Activated CD8-positive, alpha-beta T cell treated with anti-CD3 and anti-CD28 coated beads, Interleukin-2, amount 10 ng/mL, durations not matched to agents 7 days and 5 days (primary cell): ENCODE measurements at regions of chr4 and their contacts with region 1.

Region 1: DNA sequence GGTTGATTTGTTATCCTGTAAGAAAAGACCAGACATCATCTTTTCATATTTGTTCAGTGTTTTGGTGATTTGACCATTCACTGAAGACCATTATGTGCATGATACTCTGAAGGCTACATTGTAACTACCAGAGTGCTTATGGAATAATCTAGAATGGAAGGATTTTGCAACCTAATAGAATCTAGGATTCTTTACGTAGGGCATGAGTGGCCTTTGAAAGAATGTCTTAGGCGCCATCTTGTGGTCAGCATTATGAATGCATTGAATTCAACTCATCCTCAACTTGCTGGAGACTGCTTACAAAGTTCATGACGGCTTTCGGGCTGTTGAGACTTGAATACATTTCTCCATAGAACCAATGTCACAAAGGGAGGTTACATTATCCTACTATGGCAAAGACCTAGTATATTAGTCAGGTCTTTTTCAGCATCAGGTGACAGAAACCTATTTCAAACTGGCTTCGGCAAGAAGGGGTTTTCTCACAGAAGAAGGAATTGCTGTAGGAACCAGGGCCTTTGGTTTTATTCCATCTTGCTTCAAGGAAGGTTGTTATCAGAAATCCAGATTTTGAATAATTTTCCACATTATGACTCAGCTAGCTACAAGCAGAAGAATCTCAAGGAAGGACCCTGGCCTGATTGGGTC is 104.1 kb downstream of the GPAT3 start:
- DNase-seq: peak; percentile 73
- ATAC-seq: peak; percentile 65
- H3K4me3 Mint-ChIP-seq: no peak overlapping the region
- H3K27ac Mint-ChIP-seq: no peak overlapping the region
- H3K4me1 Mint-ChIP-seq: no peaks in the 10 kb centered on the region
- H3K27me3 Mint-ChIP-seq: peaks cover 10% of the 10 kb centered on the region

Region 2: DNA sequence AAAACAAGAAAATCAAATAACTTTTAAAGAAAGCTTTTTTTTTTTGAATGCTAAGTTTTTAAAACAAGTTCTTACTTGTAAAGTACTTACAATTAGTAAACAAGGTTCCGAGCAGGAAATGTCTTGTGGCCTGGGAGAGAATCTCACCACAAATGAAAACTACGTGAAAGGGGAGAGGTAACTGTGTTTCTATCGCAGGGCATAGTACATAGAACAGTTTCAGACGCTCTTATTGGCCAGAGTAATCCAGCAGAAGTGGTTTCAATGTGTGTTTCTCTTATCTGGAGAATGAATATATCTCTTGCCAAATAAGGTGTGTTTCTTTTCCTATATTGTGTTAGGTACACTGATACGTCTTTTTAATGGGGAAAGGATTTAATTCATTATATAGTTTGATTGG is 525.4 kb before region 1 on chr4 and contains the start of gene PLAC8:
- CTCF ChIA-PET with region 1: no interaction called
- POLR2A ChIA-PET with region 1: no interaction called
- DNase-seq: peak; percentile 82
- ATAC-seq: peak; percentile 60
- H3K4me3 Mint-ChIP-seq: peak within 1 kb of the TSS; percentile 89
- H3K27ac Mint-ChIP-seq: peak within 1 kb of the TSS; percentile 93
- H3K4me1 Mint-ChIP-seq: peaks cover 55% of the 10 kb centered on the region
- H3K27me3 Mint-ChIP-seq: no peaks in the 10 kb centered on the region
- total RNA-seq, gene PLAC8: 193 to 198 TPM

Region 3: GRCh38 chr4:83510442-83510841 is 129.5 kb before region 1 on chr4:
- CTCF ChIA-PET with region 1: interaction called, 21 read pairs
- POLR2A ChIA-PET with region 1: no interaction called
- DNase-seq: no peak
- ATAC-seq: no peak
- H3K4me3 Mint-ChIP-seq: no peak overlapping the region
- H3K27ac Mint-ChIP-seq: no peak overlapping the region
- H3K4me1 Mint-ChIP-seq: no peaks in the 10 kb centered on the region
- H3K27me3 Mint-ChIP-seq: no peaks in the 10 kb centered on the region

Region 4: GRCh38 chr4:83651502-83652245 is 11.7 kb after region 1 on chr4:
- CTCF ChIA-PET with region 1: interaction called, 19 read pairs
- POLR2A ChIA-PET with region 1: no interaction called
- DNase-seq: no peak
- ATAC-seq: no peak
- H3K4me3 Mint-ChIP-seq: no peak overlapping the region
- H3K27ac Mint-ChIP-seq: no peak overlapping the region
- H3K4me1 Mint-ChIP-seq: no peaks in the 10 kb centered on the region
- H3K27me3 Mint-ChIP-seq: peaks cover 2% of the 10 kb centered on the region

Region 5: DNA sequence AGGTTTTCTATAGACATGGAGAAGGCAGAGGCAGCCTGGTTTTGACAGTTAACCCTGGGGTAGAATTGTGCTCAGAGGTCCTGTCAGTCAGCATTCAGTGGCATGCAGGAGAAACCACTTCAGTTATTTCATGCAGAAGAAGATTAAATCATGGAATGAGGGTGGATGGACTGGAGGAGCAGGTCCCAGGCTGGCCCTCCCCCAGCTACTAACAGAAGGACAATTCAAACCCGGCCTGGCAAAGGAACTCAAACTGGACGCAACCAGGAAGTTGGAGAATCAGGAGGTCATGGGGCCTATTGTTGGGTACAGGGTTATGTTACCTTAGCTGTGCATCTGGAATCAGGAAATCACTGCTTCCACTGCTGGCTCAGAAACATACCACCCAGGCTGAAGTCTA is 17.3 kb after region 1 on chr4:
- CTCF ChIA-PET with region 1: interaction called, 19 read pairs
- POLR2A ChIA-PET with region 1: no interaction called
- DNase-seq: no peak
- ATAC-seq: no peak
- H3K4me3 Mint-ChIP-seq: no peak overlapping the region
- H3K27ac Mint-ChIP-seq: no peak overlapping the region
- H3K4me1 Mint-ChIP-seq: peaks cover 7% of the 10 kb centered on the region
- H3K27me3 Mint-ChIP-seq: no peaks in the 10 kb centered on the region

Region 6: DNA sequence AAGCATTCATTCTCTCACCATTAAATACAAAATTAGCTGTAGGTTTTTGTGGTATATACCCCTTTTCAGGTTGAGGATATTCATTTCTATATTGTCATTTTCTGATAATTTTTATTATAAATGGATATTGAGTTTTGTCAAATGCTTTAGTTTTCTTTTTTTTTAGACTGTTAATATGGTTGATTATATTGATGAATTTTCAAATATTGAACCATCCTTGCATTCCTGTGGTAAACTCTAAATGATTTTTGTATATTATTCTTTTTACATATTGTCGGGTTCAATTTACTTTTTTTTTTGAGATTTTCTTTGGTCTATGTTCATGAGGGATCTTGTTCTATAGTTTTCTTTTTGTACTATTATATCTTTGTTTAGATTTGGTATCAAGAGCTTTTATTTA is 61.1 kb after region 1 on chr4:
- CTCF ChIA-PET with region 1: no interaction called
- POLR2A ChIA-PET with region 1: no interaction called
- DNase-seq: no peak
- ATAC-seq: no peak
- H3K4me3 Mint-ChIP-seq: no peak overlapping the region
- H3K27ac Mint-ChIP-seq: no peak overlapping the region
- H3K4me1 Mint-ChIP-seq: no peaks in the 10 kb centered on the region
- H3K27me3 Mint-ChIP-seq: peaks cover 6% of the 10 kb centered on the region